ENCODE measurements at regions of chr12 and their contacts with region 1.

Region 1: GRCh38 chr12:104223712-104224111 is 8.1 kb downstream of the TXNRD1 start:
- DNase-seq: no peak

Region 2: GRCh38 chr12:104182144-104182543 is 41.6 kb before region 1 on chr12:
- intact Hi-C with region 1: loop called in 1 of 2 experiments (anchors 1 kb)
- DNase-seq: peak; percentile 92

Measured in posterior vena cava (tissue), 2 donors.